ENCODE measurements at regions of chr13 and their contacts with region 1.

Region 1: GRCh38 chr13:41465241-41465847 is 8.0 kb downstream of the RGCC start:
- DNase-seq: peak; percentile 71 to 93 (median 87)
- ATAC-seq: peak; percentile 73 to 91 (median 90)
- H3K4me3 ChIP-seq: peak overlapping the region in 1 of 2 donors; percentile 66
- H3K4me3 Mint-ChIP-seq: peak overlapping the region; percentile 90 to 92 (median 91)
- H3K27ac ChIP-seq: peak overlapping the region; percentile 95
- H3K27ac Mint-ChIP-seq: peak overlapping the region; percentile 100
- H3K4me1 ChIP-seq: peaks cover 59 to 74% of the 10 kb centered on the region in 2 experiments
- H3K4me1 Mint-ChIP-seq: peaks cover 93 to 97% (median 95%) of the 10 kb centered on the region in 3 donors
- H3K27me3 ChIP-seq: no peaks in the 10 kb centered on the region
- H3K27me3 Mint-ChIP-seq: no peaks in the 10 kb centered on the region

Region 2: GRCh38 chr13:40910324-40911050 is 554.9 kb before region 1 on chr13:
- CTCF ChIA-PET with region 1: no interaction called
- POLR2A ChIA-PET with region 1: no interaction called
- DNase-seq: no peak
- ATAC-seq: no peak
- H3K4me3 ChIP-seq: no peak overlapping the region
- H3K4me3 Mint-ChIP-seq: no peak overlapping the region
- H3K27ac ChIP-seq: no peak overlapping the region
- H3K27ac Mint-ChIP-seq: no peak overlapping the region
- H3K4me1 ChIP-seq: no peaks in the 10 kb centered on the region
- H3K4me1 Mint-ChIP-seq: peaks cover 10 to 25% (median 18%) of the 10 kb centered on the region in 3 donors
- H3K27me3 ChIP-seq: no peaks in the 10 kb centered on the region
- H3K27me3 Mint-ChIP-seq: no peaks in the 10 kb centered on the region

Region 3: GRCh38 chr13:41492404-41493260 is 27.3 kb after region 1 on chr13:
- CTCF ChIA-PET with region 1: interaction called, 8 to 14 read pairs
- POLR2A ChIA-PET with region 1: interaction called, 14 to 15 read pairs
- DNase-seq: peak in 23 of 35 experiments; percentile 4 to 76 (median 29)
- ATAC-seq: peak; percentile 78 to 88 (median 82)
- H3K4me3 ChIP-seq: peak overlapping the region in 1 of 2 donors; percentile 33
- H3K4me3 Mint-ChIP-seq: peak overlapping the region; percentile 62 to 67 (median 65)
- H3K27ac ChIP-seq: peak overlapping the region; percentile 92
- H3K27ac Mint-ChIP-seq: peak overlapping the region; percentile 99
- H3K4me1 ChIP-seq: peaks cover 43 to 59% of the 10 kb centered on the region in 2 experiments
- H3K4me1 Mint-ChIP-seq: peaks cover 79 to 87% (median 83%) of the 10 kb centered on the region in 3 donors
- H3K27me3 ChIP-seq: no peaks in the 10 kb centered on the region
- H3K27me3 Mint-ChIP-seq: no peaks in the 10 kb centered on the region

Region 4: DNA sequence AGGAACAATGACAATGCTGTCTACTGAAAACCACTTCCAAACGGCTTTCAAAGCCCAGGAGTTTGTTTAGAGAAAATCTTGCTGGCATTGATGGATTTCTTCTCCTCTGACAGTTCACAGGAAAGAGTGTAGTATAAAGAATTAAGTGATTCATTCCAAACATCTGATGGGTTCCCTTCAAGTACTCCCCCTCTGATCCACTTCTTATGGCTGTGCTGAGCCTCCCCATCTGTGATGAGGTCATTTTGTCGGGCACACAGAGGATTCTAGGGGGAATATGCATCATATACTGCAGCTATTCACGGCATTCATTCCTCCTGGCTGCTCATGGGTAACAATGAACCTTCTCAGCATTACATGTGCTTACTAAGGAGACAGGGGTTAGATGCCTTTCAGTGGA is 99.9 kb after region 1 on chr13:
- CTCF ChIA-PET with region 1: interaction called, 3 to 4 read pairs
- POLR2A ChIA-PET with region 1: interaction called in 1 of 2 experiments, 10 read pairs
- DNase-seq: no peak
- ATAC-seq: no peak
- H3K4me3 ChIP-seq: no peak overlapping the region
- H3K4me3 Mint-ChIP-seq: no peak overlapping the region
- H3K27ac ChIP-seq: no peak overlapping the region
- H3K27ac Mint-ChIP-seq: no peak overlapping the region
- H3K4me1 ChIP-seq: peaks cover 0 to 4% of the 10 kb centered on the region in 2 experiments
- H3K4me1 Mint-ChIP-seq: peaks cover 19 to 25% (median 20%) of the 10 kb centered on the region in 3 donors
- H3K27me3 ChIP-seq: no peaks in the 10 kb centered on the region
- H3K27me3 Mint-ChIP-seq: no peaks in the 10 kb centered on the region

Region 5: DNA sequence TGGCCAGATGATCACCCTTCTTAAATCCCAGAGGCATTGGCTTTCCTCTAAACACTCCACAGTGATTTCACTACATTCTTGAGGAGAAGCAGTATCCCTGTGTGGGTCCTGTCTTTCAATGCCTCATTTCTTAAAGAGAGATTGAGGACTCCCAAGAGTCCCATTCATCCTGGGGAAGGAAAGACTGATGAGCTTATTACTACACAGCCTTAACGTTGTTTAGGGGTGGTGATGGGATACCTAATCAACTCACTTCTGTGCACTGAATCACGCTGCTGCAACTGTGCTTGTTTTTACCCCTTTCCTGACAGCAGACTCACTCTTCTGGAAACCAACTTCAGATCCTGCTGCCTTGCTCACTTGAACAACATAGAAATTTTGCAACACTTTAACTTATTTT is 195.1 kb after region 1 on chr13:
- CTCF ChIA-PET with region 1: no interaction called
- POLR2A ChIA-PET with region 1: no interaction called
- DNase-seq: no peak
- ATAC-seq: no peak
- H3K4me3 ChIP-seq: no peak overlapping the region
- H3K4me3 Mint-ChIP-seq: no peak overlapping the region
- H3K27ac ChIP-seq: no peak overlapping the region
- H3K27ac Mint-ChIP-seq: no peak overlapping the region
- H3K4me1 ChIP-seq: no peaks in the 10 kb centered on the region
- H3K4me1 Mint-ChIP-seq: peaks cover 0 to 4% (median 0%) of the 10 kb centered on the region in 3 donors
- H3K27me3 ChIP-seq: no peaks in the 10 kb centered on the region
- H3K27me3 Mint-ChIP-seq: no peaks in the 10 kb centered on the region